ENCODE measurements at regions of chr9 and their contacts with region 1.

Region 1: DNA sequence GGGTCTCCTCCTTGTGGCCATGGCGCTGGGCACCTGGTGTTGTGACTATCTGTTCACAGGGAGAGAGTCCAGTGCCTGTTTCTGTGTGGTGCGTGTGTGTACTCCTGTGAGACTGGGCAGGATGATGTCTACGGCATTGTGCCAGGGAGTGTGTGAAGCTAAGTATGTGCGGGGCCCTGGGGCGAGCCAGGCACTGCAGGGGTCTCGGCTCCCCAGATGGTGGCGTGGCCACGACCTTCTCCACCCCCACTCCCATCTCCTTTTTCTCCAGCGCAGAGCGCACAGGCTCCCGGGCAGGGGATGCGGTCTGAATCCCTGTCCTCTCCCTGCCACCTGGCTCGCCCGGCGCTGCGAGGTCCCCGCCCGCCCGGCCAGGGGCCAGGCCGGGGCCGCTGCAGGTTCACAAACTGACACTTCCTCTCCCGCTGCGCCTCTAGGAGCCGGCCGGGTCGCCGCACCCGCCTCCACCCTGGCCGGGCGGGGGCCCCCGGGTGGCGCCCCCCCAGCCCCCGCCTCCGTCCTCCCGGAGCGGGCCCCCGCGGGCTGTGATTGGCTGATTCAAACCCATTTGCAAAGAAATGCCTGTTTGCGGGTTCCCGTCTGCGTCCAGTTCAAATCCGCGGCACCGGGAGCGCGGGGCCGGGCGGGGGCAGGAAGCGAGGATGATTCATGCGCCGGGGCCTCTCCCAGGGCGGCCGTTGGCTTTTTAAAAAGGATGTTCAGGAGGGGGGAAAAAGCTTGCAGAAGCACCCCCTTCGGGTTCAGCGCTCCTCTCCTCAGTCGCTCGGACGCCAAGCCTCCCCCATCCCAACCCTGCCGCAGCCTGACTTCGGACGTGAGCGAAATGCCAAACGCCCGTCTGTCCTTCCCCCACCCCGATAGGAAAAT is 790 bp downstream of the PHF19 start:
- DNase-seq: no peak
- ATAC-seq: peak; percentile 80
- H3K4me3 ChIP-seq: peak overlapping the region; percentile 57 to 68
- H3K27ac ChIP-seq: peak overlapping the region; percentile 94
- H3K4me1 ChIP-seq: peaks cover 38% of the 10 kb centered on the region
- H3K27me3 ChIP-seq: no peaks in the 10 kb centered on the region
- CTCF ChIP-seq: no peak

Region 2: GRCh38 chr9:120842690-120843499 is 33.3 kb before region 1 on chr9 and contains the start of gene PSMD5:
- CTCF ChIA-PET with region 1: no interaction called
- POLR2A ChIA-PET with region 1: no interaction called
- in situ Hi-C with region 1: no loop called
- intact Hi-C with region 1: no loop called
- DNase-seq: peak; percentile 84
- ATAC-seq: peak; percentile 100
- H3K4me3 ChIP-seq: peak within 1 kb of the TSS; percentile 84 to 95
- H3K27ac ChIP-seq: peak within 1 kb of the TSS; percentile 94
- H3K4me1 ChIP-seq: peaks cover 8% of the 10 kb centered on the region; the same call in 1 of the 2 replicates
- H3K27me3 ChIP-seq: no peaks in the 10 kb centered on the region
- CTCF ChIP-seq: no peak
- total RNA-seq, gene PSMD5: 53.0 TPM

Region 3: GRCh38 chr9:120928483-120929228 is 52.5 kb after region 1 on chr9:
- CTCF ChIA-PET with region 1: no interaction called
- POLR2A ChIA-PET with region 1: no interaction called
- in situ Hi-C with region 1: no loop called
- intact Hi-C with region 1: loop called (anchors 5 kb)
- DNase-seq: no peak
- ATAC-seq: peak; percentile 89
- H3K4me3 ChIP-seq: peak overlapping the region; percentile 55 to 59
- H3K27ac ChIP-seq: peak overlapping the region; percentile 79
- H3K4me1 ChIP-seq: peaks cover 11% of the 10 kb centered on the region; the same call in 1 of the 2 replicates
- H3K27me3 ChIP-seq: no peaks in the 10 kb centered on the region
- CTCF ChIP-seq: no peak